ENCODE measurements at regions of chr12 and their contacts with region 1.

Region 1: GRCh38 chr12:98644711-98645402 is at the starts of genes APAF1 and IKBIP:
- DNase-seq: peak; percentile 97
- H3K4me3 ChIP-seq: peak within 1 kb of the TSS; percentile 85 to 97 (median 92)
- H3K27ac ChIP-seq: peak within 1 kb of the TSS; percentile 86 to 93 (median 88)
- H3K4me1 ChIP-seq: peaks cover 0 to 33% (median 18%) of the 10 kb centered on the region in 4 donors
- H3K27me3 ChIP-seq: no peaks in the 10 kb centered on the region
- CTCF ChIP-seq: no peak
- EP300 ChIP-seq: no peak
- POLR2A ChIP-seq: peak; percentile 68 to 82
- total RNA-seq, gene APAF1: 6.2 to 14.6 (median 9.4) TPM
- total RNA-seq, gene IKBIP: 6.8 to 15.2 (median 10.8) TPM

Region 2: GRCh38 chr12:98503592-98504367 is 141.1 kb before region 1 on chr12:
- intact Hi-C with region 1: loop called (anchors 5 kb)
- DNase-seq: peak; percentile 97
- H3K4me3 ChIP-seq: peak overlapping the region; percentile 53 to 66 (median 59)
- H3K27ac ChIP-seq: peak overlapping the region; percentile 91 to 97 (median 94)
- H3K4me1 ChIP-seq: peaks cover 0 to 10% (median 4%) of the 10 kb centered on the region in 4 donors
- H3K27me3 ChIP-seq: no peaks in the 10 kb centered on the region
- CTCF ChIP-seq: no peak
- EP300 ChIP-seq: no peak
- POLR2A ChIP-seq: peak in 1 of 2 donors; percentile 41

Region 3: DNA sequence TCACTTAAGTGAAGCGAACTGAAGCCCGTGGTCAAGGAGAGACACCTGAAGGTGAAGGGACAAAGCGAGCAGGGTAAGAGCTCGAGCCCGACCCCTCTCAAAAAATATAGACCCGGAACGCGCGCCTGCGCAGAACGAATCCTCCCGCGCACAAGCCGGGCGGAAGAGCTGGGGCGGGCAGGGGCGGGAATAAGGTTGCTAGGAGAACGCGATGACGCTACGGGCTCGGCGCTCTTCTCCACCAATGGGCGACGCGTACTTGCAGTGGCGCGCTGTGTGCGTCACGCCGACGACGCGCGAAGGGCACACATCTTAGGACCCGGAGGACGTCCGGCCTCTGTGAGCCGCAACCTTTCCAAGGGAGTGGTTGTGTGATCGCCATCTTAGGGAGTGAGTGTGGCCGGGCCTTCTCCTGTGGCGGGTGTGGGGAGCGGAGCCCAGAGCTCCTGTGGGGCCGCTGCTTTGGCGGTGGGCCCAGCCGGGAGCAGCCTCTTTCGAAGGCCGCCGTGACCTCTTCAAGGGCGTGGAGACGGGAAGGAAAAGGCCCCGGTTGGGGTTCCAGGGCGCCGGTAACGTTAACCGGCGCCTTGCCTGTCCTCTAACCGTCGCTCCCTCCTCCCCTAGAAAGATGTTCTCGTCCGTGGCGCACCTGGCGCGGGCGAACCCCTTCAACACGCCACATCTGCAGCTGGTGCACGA is 51.4 kb before region 1 on chr12 and contains the start of gene SLC25A3:
- intact Hi-C with region 1: loop called (anchors 1 kb)
- DNase-seq: peak; percentile 98
- H3K4me3 ChIP-seq: peak within 1 kb of the TSS; percentile 76 to 98 (median 88)
- H3K27ac ChIP-seq: peak within 1 kb of the TSS; percentile 94 to 100 (median 96)
- H3K4me1 ChIP-seq: peaks cover 0 to 40% (median 30%) of the 10 kb centered on the region in 4 donors
- H3K27me3 ChIP-seq: no peaks in the 10 kb centered on the region
- CTCF ChIP-seq: no peak
- EP300 ChIP-seq: peak in 1 of 4 donors; percentile 6
- POLR2A ChIP-seq: peak; percentile 96 to 97
- total RNA-seq, gene SLC25A3: 525 to 641 (median 599) TPM